Common myeloid progenitor, CD34-positive (primary cell): ENCODE measurements at regions of chr9 and their contacts with region 1.

Region 1: DNA sequence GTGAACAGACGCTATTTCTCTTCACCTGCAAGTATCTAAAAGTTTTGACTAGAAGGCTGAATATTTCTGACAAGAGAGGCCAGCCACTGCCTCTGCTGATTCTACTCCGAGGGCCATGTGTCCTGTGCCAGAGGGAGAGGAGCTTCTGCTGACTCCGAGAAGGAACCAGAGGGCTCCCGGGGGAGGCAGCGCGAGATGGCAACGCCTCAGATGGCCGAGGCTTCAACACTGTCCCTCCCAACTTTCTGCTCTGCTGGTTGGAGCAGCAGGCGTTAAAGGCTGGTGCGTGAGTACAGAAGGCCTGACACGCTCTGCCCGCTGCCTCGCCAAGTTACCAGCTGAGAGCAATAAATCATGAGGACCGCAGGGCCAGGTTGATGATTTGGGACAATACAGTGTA is 178.8 kb downstream of the GAPVD1 start:
- DNase-seq: no peak
- H3K4me3 ChIP-seq: no peak overlapping the region
- H3K27ac ChIP-seq: no peak overlapping the region
- H3K4me1 ChIP-seq: no peaks in the 10 kb centered on the region
- H3K27me3 ChIP-seq: no peaks in the 10 kb centered on the region

Region 2: GRCh38 chr9:125428060-125428901 is 12.1 kb before region 1 on chr9:
- CTCF ChIA-PET with region 1: interaction called, 13 read pairs
- POLR2A ChIA-PET with region 1: no interaction called
- DNase-seq: peak; percentile 24 to 45 (median 36)
- H3K4me3 ChIP-seq: no peak overlapping the region
- H3K27ac ChIP-seq: no peak overlapping the region
- H3K4me1 ChIP-seq: peaks cover 0 to 2% (median 0%) of the 10 kb centered on the region in 4 experiments
- H3K27me3 ChIP-seq: no peaks in the 10 kb centered on the region

Region 3: DNA sequence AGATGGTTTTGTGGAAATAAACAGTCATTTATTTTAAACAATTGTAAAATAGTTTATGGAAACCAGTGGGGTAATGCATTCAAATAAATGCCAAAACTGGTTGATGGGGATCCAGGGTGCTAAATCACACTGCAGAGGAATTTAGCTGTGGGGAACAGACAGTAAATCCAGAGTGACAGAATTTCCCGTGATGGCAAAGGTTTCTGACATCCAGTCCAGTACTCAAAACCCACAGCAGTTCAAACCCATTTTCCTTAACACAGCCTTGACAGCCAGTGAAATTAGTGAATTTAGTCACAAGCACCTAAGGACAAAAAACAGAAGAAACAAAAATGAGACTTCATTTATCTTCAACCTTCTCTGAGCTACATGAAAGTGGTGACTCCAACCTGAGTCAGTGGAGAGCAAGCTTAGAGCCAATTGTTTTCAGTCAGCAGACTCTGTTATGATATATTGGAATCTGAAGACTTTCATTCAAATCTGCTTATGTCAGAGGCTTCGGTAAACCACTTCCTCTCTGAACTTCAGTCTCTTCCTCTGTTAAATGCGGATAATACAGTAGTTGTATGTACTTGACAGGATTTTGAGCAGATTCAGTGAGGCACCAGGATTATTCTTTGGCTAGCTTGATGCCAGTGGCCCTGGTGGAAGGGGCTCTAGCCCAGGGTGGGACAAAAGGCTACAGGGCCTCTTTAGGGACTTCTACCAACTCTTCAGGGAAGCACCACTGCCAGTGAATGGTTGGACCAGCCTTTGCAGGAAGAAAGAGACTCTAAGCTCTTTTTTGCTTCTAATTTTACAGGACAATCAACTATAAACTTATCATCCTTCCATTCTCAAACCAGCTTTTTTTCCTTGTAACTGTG is 81.3 kb after region 1 on chr9:
- CTCF ChIA-PET with region 1: no interaction called
- POLR2A ChIA-PET with region 1: no interaction called
- DNase-seq: peak; percentile 62 to 92 (median 90)
- H3K4me3 ChIP-seq: peak overlapping the region in 2 of 7 experiments; percentile 7 to 43
- H3K27ac ChIP-seq: no peak overlapping the region
- H3K4me1 ChIP-seq: peaks cover 7 to 25% (median 15%) of the 10 kb centered on the region in 4 experiments
- H3K27me3 ChIP-seq: no peaks in the 10 kb centered on the region